Naive thymus-derived CD4-positive, alpha-beta T cell (primary cell): ENCODE measurements at regions of chr5 and their contacts with region 1.

Region 1: DNA sequence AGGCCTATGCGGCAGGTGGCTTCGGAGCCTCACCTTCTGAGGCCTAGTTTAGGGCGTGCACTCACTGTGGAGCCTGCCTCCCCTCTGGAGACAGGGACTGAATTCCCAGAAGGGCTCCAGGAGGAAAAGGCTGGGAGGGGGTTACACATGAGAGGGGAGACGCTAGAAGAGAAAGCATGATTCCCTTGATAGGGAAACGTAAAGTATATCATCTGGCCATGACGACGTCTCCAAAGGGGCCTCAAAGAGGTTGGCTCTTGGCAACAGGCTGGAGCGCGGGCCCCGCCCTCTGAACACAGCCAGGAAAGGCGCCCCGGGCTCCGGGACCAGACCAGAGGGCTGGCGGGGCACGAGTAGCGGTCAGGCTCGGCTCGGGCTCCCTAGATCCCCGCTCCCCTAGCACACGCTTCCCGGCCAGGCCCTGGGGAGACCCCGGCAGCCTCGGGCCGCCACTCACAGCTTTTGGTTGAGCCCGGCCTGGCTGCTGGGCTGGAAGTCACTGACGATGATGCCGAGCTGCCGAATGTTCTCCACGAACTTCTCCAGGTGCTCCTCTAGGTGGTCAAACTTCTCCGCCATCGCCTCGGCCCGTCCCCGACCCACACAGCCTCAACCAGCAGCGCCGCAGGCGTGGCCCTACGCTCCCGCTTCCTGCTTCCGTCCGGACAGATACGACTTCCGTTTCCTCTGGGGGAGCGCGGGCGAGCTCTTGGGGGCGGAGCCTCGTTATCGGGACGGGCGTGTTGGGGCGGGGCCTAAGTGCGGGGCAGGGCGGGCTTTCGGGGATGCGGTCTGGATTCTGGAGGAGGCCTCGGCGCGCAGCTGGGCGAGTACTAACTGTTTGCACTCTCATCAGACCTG is at the start of gene MED10:
- DNase-seq: peak; percentile 85 to 96 (median 93)
- ATAC-seq: peak; percentile 99
- H3K4me3 ChIP-seq: peak within 1 kb of the TSS; percentile 92
- H3K4me3 Mint-ChIP-seq: peak within 1 kb of the TSS; percentile 89 to 100 (median 98)
- H3K27ac ChIP-seq: peak within 1 kb of the TSS; percentile 94
- H3K27ac Mint-ChIP-seq: peak within 1 kb of the TSS; percentile 95 to 99 (median 96)
- H3K4me1 ChIP-seq: peaks cover 23 to 24% of the 10 kb centered on the region in 2 donors
- H3K4me1 Mint-ChIP-seq: peaks cover 30 to 64% (median 55%) of the 10 kb centered on the region in 7 donors
- H3K27me3 ChIP-seq: no peaks in the 10 kb centered on the region
- H3K27me3 Mint-ChIP-seq: peaks cover 0 to 4% (median 0%) of the 10 kb centered on the region in 5 donors
- total RNA-seq, gene MED10: 46.0 to 79.7 (median 61.2) TPM

Region 2: DNA sequence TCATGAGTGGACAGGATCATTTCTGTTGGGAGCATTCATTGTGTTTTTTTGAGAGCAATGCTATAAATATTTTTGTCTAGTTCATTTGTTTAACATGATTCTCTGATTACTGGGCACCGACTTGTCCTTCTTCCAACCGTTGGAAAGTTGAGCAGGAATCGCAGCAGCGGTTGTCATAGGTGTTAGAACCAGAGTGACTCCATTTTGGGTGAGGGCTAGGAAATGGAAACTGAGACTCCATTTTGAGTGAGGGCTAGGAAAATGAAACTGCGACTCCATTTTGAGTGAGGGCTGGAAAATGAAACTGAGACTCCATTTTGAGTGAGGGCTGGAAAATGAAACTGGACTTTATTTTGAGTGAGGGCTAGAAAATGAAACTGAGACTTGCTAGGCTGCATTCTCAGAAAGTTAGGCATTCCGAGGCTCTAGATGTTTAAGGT is 855.0 kb before region 1 on chr5:
- CTCF ChIA-PET with region 1: no interaction called
- POLR2A ChIA-PET with region 1: no interaction called
- intact Hi-C with region 1: loop called in 1 of 2 experiments (anchors 1 kb)
- DNase-seq: peak in 7 of 9 donors; percentile 31 to 58 (median 50)
- ATAC-seq: peak; percentile 75
- H3K4me3 ChIP-seq: peak overlapping the region; percentile 48
- H3K4me3 Mint-ChIP-seq: peak overlapping the region in 9 of 10 donors; percentile 43 to 83 (median 70)
- H3K27ac ChIP-seq: no peak overlapping the region
- H3K27ac Mint-ChIP-seq: peak overlapping the region; percentile 0 to 90 (median 75)
- H3K4me1 ChIP-seq: peaks cover 0 to 3% of the 10 kb centered on the region in 2 donors
- H3K4me1 Mint-ChIP-seq: peaks cover 1 to 25% (median 17%) of the 10 kb centered on the region in 7 donors
- H3K27me3 ChIP-seq: no peaks in the 10 kb centered on the region
- H3K27me3 Mint-ChIP-seq: peaks cover 0 to 3% (median 0%) of the 10 kb centered on the region in 5 donors

Region 3: DNA sequence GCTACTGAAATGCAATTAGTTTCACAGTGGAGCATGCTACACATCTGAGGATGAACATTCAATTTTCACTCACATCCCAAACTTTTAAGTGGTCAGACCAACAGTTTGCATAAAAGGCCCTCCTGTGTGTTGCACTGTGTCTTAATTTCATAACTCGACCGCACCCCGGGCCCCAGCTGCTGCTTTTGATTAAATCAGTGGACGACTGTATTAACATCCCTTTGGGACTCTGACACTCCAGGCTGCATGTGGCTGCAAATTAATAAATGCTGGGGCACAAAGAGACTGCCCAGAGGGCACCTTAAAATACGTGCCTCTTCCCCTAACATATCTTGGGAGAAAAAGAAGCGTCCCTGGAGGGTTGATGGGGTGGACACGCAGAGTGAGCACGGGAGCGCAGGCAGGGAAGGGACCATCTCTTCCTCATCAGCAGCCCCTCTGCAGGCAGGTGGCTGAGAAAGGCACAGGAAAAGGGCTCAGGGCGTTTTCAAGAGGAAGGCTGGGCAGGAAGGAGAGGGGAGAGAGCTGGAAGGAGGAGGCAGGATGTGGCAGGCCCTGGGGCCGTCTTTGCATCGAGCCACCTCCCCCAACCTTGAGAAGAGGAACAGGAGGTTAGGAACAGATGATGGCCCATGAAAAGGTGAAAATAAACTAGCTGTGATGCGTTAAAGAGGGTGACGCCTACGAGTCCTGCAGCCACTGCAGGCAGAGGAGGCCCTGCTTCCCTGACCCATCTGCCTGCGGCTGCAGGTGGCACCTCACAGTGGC is 18.4 kb before region 1 on chr5:
- CTCF ChIA-PET with region 1: no interaction called
- POLR2A ChIA-PET with region 1: interaction called, 9 read pairs
- intact Hi-C with region 1: loop called (anchors 1 kb)
- DNase-seq: peak in 7 of 9 donors; percentile 26 to 67 (median 59)
- ATAC-seq: peak; percentile 71
- H3K4me3 ChIP-seq: peak overlapping the region; percentile 56
- H3K4me3 Mint-ChIP-seq: peak overlapping the region; percentile 76 to 89 (median 82)
- H3K27ac ChIP-seq: peak overlapping the region; percentile 59
- H3K27ac Mint-ChIP-seq: peak overlapping the region; percentile 79 to 99 (median 93)
- H3K4me1 ChIP-seq: peaks cover 4 to 23% of the 10 kb centered on the region in 2 donors
- H3K4me1 Mint-ChIP-seq: peaks cover 8 to 46% (median 30%) of the 10 kb centered on the region in 7 donors
- H3K27me3 ChIP-seq: no peaks in the 10 kb centered on the region
- H3K27me3 Mint-ChIP-seq: no peaks in the 10 kb centered on the region

Region 4: DNA sequence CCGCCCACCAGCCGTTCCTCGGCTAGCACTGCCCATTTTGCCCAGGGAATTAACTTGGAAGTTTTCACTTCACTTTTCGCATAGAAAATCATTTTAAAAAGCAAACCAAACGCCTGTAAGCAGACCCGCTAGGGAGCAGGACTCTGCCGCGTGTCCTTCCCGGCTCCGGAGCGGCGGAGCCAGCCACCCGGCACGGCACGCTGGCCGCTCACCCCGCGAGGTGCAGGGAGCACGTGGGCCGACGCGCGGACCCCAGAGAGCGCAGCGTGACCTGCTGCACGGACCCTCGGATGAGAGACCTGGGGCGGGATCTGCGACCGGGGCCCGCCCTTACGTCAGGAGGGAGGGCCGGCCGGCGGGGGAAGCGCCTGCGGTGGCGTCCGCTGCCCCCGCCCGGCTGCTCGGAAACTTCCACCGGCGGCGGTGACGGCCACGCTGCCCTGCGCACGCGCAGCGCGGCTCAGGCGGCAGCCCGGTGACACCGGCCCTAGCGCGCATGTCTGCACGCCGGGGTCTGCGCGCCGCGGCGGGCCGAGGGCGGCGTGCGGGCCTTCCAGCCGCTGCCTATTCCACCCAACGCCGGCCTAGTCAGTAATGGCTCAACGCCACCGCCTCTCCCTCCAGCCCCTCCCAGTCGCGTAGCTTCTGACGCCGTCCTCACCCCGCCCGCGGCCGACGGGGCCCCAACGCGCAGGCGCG is 334.6 kb after region 1 on chr5:
- CTCF ChIA-PET with region 1: no interaction called
- POLR2A ChIA-PET with region 1: interaction called, 5 read pairs
- intact Hi-C with region 1: loop called (anchors 1 kb)
- DNase-seq: peak; percentile 94 to 99 (median 98)
- ATAC-seq: peak; percentile 87
- H3K4me3 ChIP-seq: peak overlapping the region; percentile 95
- H3K4me3 Mint-ChIP-seq: peak overlapping the region; percentile 80 to 92 (median 89)
- H3K27ac ChIP-seq: peak overlapping the region; percentile 95
- H3K27ac Mint-ChIP-seq: peak overlapping the region; percentile 77 to 94 (median 92)
- H3K4me1 ChIP-seq: peaks cover 21 to 24% of the 10 kb centered on the region in 2 donors
- H3K4me1 Mint-ChIP-seq: peaks cover 26 to 44% (median 33%) of the 10 kb centered on the region in 7 donors
- H3K27me3 ChIP-seq: no peaks in the 10 kb centered on the region
- H3K27me3 Mint-ChIP-seq: peaks cover 0 to 4% (median 0%) of the 10 kb centered on the region in 5 donors

Region 5: DNA sequence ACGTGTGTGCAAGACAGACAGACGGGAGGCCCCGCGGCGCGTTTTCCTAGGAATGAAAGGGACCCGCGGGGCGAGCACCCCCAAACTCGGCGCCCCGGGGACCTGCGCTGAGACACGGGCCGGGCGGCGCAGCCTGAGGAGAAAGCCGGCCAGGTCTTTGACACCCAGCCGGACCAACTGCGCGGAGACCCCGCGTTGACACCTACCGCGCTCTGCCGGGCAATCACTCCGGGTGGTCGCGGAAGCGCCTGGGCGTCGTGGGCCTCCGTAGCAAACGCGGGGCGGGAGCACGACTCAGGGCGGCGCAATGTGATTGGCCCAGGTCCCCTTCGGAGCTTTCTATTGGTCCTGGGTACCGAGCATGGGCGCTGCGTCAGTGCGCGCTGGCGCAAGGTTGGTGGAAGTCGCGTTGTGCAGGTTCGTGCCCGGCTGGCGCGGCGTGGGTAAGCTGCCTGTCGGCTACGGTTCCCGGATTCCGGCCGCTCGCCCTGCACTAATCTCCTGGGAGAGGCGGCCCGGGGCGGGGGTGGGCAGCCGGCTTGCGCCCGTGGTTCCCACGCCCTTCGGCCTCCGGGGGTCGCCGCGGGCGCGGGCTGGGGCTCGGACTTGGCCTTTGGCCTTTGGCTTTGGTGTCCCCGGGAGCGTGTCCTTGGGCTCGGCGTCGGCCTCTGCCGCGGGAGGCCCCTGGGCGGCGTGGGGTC is 1490.8 kb after region 1 on chr5 and contains the starts of genes FASTKD3 and MTRR:
- CTCF ChIA-PET with region 1: no interaction called
- POLR2A ChIA-PET with region 1: no interaction called
- intact Hi-C with region 1: loop called (anchors 2 kb)
- DNase-seq: peak; percentile 75 to 90 (median 87)
- ATAC-seq: peak; percentile 100
- H3K4me3 ChIP-seq: peak within 1 kb of the TSS; percentile 75
- H3K4me3 Mint-ChIP-seq: peak within 1 kb of the TSS; percentile 90 to 100 (median 96)
- H3K27ac ChIP-seq: peak within 1 kb of the TSS; percentile 87
- H3K27ac Mint-ChIP-seq: peak within 1 kb of the TSS; percentile 85 to 97 (median 93)
- H3K4me1 ChIP-seq: peaks cover 38 to 43% of the 10 kb centered on the region in 2 donors
- H3K4me1 Mint-ChIP-seq: peaks cover 53 to 84% (median 82%) of the 10 kb centered on the region in 7 donors
- H3K27me3 ChIP-seq: no peaks in the 10 kb centered on the region
- H3K27me3 Mint-ChIP-seq: no peaks in the 10 kb centered on the region
- total RNA-seq, gene FASTKD3: 4.2 to 15.3 (median 10.0) TPM
- total RNA-seq, gene MTRR: 65.7 to 83.2 (median 70.2) TPM